Pancreas (tissue), 10 donors: ENCODE measurements at regions of chr12 and their contacts with region 1.

Region 1: GRCh38 chr12:100234598-100235304 is 32.1 kb downstream of the DEPDC4 start:
- DNase-seq: no peak
- ATAC-seq: peak in 3 of 4 donors; percentile 80 to 88 (median 86)
- H3K4me3 ChIP-seq: no peak overlapping the region
- H3K27ac ChIP-seq: no peak overlapping the region
- H3K4me1 ChIP-seq: no peaks in the 10 kb centered on the region
- H3K27me3 ChIP-seq: no peaks in the 10 kb centered on the region
- CTCF ChIP-seq: peak in 3 of 4 donors; percentile 54 to 69 (median 63)

Region 2: DNA sequence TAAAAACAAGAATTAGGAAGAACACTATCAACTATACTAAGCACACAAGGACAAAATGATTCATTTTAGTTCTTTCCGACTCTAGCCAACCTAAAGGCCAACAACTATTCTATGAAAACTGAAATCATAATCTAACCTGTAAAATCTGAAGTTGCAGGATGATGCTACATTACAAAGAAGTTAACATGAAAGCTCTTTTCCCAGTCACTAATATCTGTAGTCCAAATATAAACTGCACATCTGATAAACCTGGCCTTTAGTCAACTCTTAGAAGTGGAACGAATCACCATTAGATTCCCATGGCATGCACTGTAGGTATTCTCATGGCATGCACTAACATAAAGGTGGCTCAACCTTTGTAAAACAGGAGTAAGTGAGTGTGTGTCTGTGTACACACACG is 133.8 kb before region 1 on chr12:
- intact Hi-C with region 1: no loop called
- DNase-seq: no peak
- ATAC-seq: no peak
- H3K4me3 ChIP-seq: no peak overlapping the region
- H3K27ac ChIP-seq: no peak overlapping the region
- H3K4me1 ChIP-seq: no peaks in the 10 kb centered on the region
- H3K27me3 ChIP-seq: no peaks in the 10 kb centered on the region
- CTCF ChIP-seq: no peak

Region 3: DNA sequence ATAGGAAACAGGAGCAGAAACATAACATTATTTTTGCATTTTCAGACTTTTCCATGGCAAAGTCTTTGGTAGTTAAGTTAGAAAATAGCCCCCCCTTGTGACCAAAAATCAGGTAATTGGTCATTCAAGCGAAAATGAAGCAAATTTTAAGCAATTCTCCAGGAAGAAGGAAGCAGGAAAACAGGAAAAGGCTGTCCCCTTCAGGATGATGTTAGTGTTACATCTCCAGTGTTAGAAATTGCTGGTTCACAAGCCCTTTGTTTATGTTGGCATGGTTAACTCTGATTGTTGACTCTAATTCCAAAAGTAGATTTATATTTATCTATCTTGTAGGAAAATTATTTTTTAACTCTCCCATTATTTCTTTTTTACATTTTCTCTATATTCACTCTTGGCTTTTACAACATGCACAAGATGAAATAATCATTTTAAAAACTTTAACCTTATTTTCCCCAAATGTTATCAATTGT is 319.9 kb after region 1 on chr12:
- intact Hi-C with region 1: loop called in 2 of 3 experiments (anchors 10 kb)
- DNase-seq: peak in 3 of 6 donors; percentile 26 to 43 (median 29)
- ATAC-seq: peak; percentile 95 to 98 (median 96)
- H3K4me3 ChIP-seq: no peak overlapping the region
- H3K27ac ChIP-seq: no peak overlapping the region
- H3K4me1 ChIP-seq: peaks cover 6 to 11% (median 9%) of the 10 kb centered on the region in 3 donors
- H3K27me3 ChIP-seq: no peaks in the 10 kb centered on the region
- CTCF ChIP-seq: peak; percentile 62 to 91 (median 76)